ENCODE measurements at regions of chr4 and their contacts with region 1.

Region 1: GRCh38 chr4:69881173-69881773 is 21.3 kb upstream of the SULT1E1 start:
- DNase-seq: peak; percentile 39
- H3K4me3 Mint-ChIP-seq: no peak overlapping the region
- H3K27ac Mint-ChIP-seq: no peak overlapping the region
- H3K4me1 Mint-ChIP-seq: peaks cover 3% of the 10 kb centered on the region
- H3K27me3 Mint-ChIP-seq: peaks cover 1% of the 10 kb centered on the region

Region 2: DNA sequence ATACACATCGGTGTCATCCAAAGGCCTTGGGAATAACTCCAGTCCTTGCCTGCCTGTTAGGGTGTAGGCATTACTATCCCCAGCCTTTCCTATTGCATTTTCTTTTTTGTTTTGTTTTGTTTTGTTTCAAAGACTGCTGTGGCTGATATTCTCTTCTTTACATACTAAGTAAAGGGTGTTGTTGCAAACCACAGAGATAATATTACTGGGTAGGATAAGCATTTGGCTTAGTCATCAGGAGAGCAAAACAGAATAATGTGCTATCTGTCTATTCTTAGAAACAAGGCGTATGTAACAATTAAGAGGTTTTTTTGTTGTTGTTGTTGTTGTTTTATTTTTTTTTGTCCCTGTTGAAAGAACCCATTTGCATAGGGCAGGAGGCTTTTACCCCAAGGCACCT is 559.2 kb before region 1 on chr4:
- CTCF ChIA-PET with region 1: no interaction called
- intact Hi-C with region 1: loop called (anchors 2 kb)
- DNase-seq: no peak
- H3K4me3 Mint-ChIP-seq: no peak overlapping the region
- H3K27ac Mint-ChIP-seq: no peak overlapping the region
- H3K4me1 Mint-ChIP-seq: no peaks in the 10 kb centered on the region
- H3K27me3 Mint-ChIP-seq: no peaks in the 10 kb centered on the region

Region 3: GRCh38 chr4:69823481-69824186 is 57.6 kb before region 1 on chr4:
- CTCF ChIA-PET with region 1: interaction called, 19 read pairs
- intact Hi-C with region 1: loop called (anchors 1 kb)
- DNase-seq: peak; percentile 78
- H3K4me3 Mint-ChIP-seq: no peak overlapping the region
- H3K27ac Mint-ChIP-seq: no peak overlapping the region
- H3K4me1 Mint-ChIP-seq: peaks cover 6% of the 10 kb centered on the region
- H3K27me3 Mint-ChIP-seq: no peaks in the 10 kb centered on the region

Region 4: DNA sequence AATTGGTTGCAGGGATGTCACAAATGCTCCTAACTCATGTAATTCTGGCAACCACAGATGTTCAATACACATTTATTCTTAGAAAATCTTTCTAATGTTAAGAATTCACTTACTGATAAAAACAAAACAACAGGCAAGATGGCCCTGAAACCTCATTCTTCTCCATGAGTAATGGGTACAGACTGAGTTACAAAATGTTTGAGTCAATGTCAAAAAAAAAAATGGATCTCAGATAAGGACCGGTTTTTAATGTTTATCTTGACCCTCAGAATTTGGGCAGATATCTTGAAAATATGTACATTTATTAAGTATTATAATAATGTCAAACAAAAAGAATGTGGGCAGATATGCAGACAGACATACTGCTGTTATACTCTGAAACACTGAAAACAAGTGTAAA is 19.5 kb before region 1 on chr4:
- CTCF ChIA-PET with region 1: interaction called, 11 read pairs
- intact Hi-C with region 1: no loop called
- DNase-seq: no peak
- H3K4me3 Mint-ChIP-seq: no peak overlapping the region
- H3K27ac Mint-ChIP-seq: no peak overlapping the region
- H3K4me1 Mint-ChIP-seq: no peaks in the 10 kb centered on the region
- H3K27me3 Mint-ChIP-seq: no peaks in the 10 kb centered on the region

Region 5: DNA sequence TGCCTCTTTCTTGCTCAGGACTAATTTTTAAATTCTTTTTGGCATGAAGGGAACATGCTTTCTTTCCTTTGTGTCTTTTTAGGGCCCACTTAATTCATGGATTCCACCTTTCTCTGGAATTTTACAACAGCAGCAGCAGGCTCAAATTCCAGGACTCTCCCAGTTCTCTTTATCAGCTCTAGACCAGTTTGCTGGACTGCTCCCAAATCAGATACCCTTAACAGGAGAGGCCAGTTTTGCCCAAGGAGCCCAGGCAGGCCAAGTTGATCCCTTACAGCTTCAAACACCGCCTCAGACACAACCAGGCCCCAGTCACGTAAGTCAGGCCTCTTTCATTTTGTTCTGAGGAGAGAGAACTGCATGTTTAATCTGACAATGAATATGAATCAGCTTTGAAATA is 316.6 kb after region 1 on chr4:
- CTCF ChIA-PET with region 1: no interaction called
- intact Hi-C with region 1: no loop called
- DNase-seq: no peak
- H3K4me3 Mint-ChIP-seq: no peak overlapping the region
- H3K27ac Mint-ChIP-seq: no peak overlapping the region
- H3K4me1 Mint-ChIP-seq: no peaks in the 10 kb centered on the region
- H3K27me3 Mint-ChIP-seq: no peaks in the 10 kb centered on the region

Region 6: GRCh38 chr4:70704331-70705145 is 823.3 kb after region 1 on chr4:
- CTCF ChIA-PET with region 1: no interaction called
- intact Hi-C with region 1: no loop called
- DNase-seq: peak; percentile 69
- H3K4me3 Mint-ChIP-seq: peak overlapping the region; percentile 81
- H3K27ac Mint-ChIP-seq: peak overlapping the region; percentile 85
- H3K4me1 Mint-ChIP-seq: peaks cover 27% of the 10 kb centered on the region
- H3K27me3 Mint-ChIP-seq: no peaks in the 10 kb centered on the region